Heart right ventricle (tissue), 16 donors: ENCODE measurements at regions of chr18 and their contacts with region 1.

Region 1: DNA sequence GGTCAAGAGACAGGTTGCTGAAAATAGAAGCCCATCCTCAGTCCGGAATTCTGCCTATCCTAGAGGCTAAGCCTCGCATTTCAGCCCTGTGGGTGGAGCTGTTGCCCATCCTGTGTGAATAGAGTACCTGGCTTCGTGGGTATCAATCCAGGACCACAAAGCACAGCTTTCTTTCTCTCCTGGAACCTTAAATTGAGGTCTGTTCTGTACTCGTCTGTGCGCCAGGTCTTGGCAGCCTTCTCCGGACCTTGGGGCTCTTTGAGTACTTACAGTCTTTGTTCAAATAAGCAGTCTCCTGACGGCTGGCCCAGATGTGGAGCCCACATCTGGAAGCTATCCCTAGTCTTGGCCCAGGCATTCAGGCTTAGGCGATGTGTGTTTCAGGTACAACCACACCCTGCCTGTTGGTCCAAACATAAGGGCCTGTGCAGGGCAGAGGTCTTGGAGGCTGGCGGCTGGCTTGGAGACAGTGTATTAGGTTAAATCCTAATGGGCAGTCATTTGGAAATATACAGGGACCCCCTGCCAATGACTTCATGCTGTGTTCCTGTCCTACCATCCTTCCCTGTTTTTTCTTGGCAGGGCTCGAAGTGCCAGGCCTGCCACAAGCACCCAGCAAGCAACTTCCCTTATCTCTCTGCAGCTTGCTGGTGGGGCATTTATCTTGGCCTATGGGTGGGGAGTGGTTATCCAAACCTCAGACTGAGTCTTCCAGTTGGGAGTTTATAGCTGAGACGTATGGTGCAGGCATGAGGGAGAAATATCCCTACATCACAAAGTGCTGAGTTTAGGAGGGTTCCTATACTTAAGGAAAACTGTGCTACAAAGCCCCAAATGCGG is 294.1 kb downstream of the BCL2 start:
- DNase-seq: peak in 1 of 2 donors; percentile 19
- ATAC-seq: peak in 5 of 8 donors; percentile 44 to 85 (median 75)
- H3K4me3 ChIP-seq: no peak overlapping the region
- H3K27ac ChIP-seq: no peak overlapping the region
- H3K4me1 ChIP-seq: peaks cover 0 to 4% (median 0%) of the 10 kb centered on the region in 9 donors
- H3K27me3 ChIP-seq: no peaks in the 10 kb centered on the region
- CTCF ChIP-seq: peak; percentile 30 to 65 (median 51)

Region 2: GRCh38 chr18:63131106-63131958 is 105.9 kb after region 1 on chr18:
- intact Hi-C with region 1: loop called in 2 of 10 experiments (anchors 10 kb)
- DNase-seq: peak in 1 of 2 donors; percentile 74
- ATAC-seq: peak; percentile 41 to 80 (median 69)
- H3K4me3 ChIP-seq: no peak overlapping the region
- H3K27ac ChIP-seq: peak overlapping the region in 2 of 10 donors; percentile 9 to 15
- H3K4me1 ChIP-seq: peaks cover 3 to 15% (median 8%) of the 10 kb centered on the region in 9 donors
- H3K27me3 ChIP-seq: no peaks in the 10 kb centered on the region
- CTCF ChIP-seq: peak; percentile 41 to 85 (median 75)

Region 3: DNA sequence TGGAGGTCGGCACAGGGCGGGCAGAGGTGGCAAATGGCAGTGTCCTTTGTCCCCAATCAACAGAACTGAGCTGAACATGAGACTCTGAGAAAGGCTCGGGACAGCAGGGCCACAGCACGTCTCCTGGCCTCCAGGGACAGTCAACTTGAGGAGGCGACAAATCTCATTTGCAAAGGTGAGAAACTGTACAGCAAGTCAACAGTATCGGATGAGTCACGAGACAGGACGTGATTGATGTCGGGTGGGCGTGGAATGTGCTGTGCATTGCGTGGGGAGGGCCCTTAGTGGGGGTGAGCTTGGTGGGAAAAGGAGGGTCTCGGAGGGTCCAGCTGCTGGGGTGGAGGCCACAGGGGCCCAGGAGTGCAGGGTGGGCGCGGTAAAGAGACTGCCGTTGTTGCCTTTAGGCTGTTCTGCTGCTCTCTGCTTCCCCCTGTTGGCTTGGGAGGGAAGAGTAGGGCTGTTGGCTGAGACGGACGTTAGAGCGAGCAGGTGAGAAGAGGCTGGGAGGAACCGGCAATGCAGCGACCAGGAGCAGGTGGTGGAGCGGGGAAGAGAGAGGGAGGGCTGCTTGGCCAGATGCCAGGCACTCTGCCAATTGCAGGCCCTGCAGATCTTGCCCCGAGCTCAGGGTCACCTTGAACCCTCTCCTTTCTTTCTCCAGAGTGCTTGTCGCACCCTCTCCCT is 129.8 kb after region 1 on chr18:
- intact Hi-C with region 1: loop called in 1 of 10 experiments (anchors 10 kb)
- DNase-seq: peak; percentile 52 to 72
- ATAC-seq: peak; percentile 69 to 90 (median 86)
- H3K4me3 ChIP-seq: peak overlapping the region in 9 of 10 donors; percentile 20 to 48 (median 38)
- H3K27ac ChIP-seq: peak overlapping the region in 1 of 10 donors; percentile 86
- H3K4me1 ChIP-seq: peaks cover under 1 to 41% (median 14%) of the 10 kb centered on the region in 9 donors
- H3K27me3 ChIP-seq: no peaks in the 10 kb centered on the region
- CTCF ChIP-seq: peak; percentile 66 to 87 (median 78)

Region 4: DNA sequence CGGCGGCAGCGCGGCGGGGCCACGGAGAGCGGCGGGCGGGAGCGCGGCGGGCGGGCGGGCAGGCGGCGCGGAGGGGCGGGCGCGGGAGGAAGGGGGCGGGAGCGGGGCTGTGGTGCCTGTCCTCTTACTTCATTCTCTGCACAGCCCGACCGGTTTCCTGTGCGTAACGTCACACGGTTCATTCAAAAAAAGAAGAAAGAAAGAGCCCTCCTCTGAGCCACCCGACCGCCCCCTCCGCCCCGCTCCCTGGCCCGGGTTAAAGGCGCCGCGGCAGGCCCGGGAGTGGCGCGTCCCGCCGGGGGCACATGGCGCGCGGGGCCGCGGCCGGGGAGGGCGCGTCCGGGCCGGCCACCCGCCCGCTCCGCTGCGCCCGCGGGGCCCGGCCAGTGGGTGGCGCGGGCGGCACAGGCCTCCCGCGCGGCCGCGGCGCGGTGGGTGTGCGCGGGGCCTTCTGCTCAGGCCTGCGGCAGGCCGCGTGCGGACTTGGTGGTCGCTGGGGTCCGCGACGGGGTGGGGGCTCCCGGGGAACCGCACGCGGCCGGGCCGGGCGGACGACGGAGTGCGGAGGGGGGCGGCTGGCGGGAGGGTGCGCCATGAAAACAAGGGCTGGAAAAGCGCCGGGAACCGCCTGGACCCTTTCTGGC is 294.7 kb after region 1 on chr18:
- intact Hi-C with region 1: loop called in 4 of 10 experiments (anchors 1 to 5 kb)
- DNase-seq: peak; percentile 80 to 90
- ATAC-seq: peak; percentile 79 to 88 (median 84)
- H3K4me3 ChIP-seq: peak overlapping the region; percentile 63 to 91 (median 77)
- H3K27ac ChIP-seq: peak overlapping the region; percentile 52 to 89 (median 78)
- H3K4me1 ChIP-seq: peaks cover 0 to 55% (median 34%) of the 10 kb centered on the region in 9 donors
- H3K27me3 ChIP-seq: peaks cover 0 to 8% (median 0%) of the 10 kb centered on the region in 7 donors
- CTCF ChIP-seq: peak in 2 of 9 donors; percentile 20 to 22

Region 5: GRCh38 chr18:63439334-63439733 is 413.9 kb after region 1 on chr18:
- intact Hi-C with region 1: loop called in 1 of 10 experiments (anchors 10 kb)
- DNase-seq: peak in 1 of 2 donors; percentile 52
- ATAC-seq: peak in 7 of 8 donors; percentile 54 to 77 (median 69)
- H3K4me3 ChIP-seq: no peak overlapping the region
- H3K27ac ChIP-seq: no peak overlapping the region
- H3K4me1 ChIP-seq: peaks cover 0 to 16% (median 0%) of the 10 kb centered on the region in 9 donors
- H3K27me3 ChIP-seq: peaks cover 0 to 7% (median 0%) of the 10 kb centered on the region in 7 donors
- CTCF ChIP-seq: peak; percentile 54 to 88 (median 83)